ENCODE measurements at regions of chr3 and their contacts with region 1.

Region 1: GRCh38 chr3:54434756-54435155 is 312.4 kb downstream of the CACNA2D3 start:
- DNase-seq: no peak
- H3K4me3 ChIP-seq: no peak overlapping the region
- H3K27ac ChIP-seq: no peak overlapping the region
- H3K4me1 ChIP-seq: no peaks in the 10 kb centered on the region
- H3K27me3 ChIP-seq: no peaks in the 10 kb centered on the region
- CTCF ChIP-seq: no peak

Region 2: DNA sequence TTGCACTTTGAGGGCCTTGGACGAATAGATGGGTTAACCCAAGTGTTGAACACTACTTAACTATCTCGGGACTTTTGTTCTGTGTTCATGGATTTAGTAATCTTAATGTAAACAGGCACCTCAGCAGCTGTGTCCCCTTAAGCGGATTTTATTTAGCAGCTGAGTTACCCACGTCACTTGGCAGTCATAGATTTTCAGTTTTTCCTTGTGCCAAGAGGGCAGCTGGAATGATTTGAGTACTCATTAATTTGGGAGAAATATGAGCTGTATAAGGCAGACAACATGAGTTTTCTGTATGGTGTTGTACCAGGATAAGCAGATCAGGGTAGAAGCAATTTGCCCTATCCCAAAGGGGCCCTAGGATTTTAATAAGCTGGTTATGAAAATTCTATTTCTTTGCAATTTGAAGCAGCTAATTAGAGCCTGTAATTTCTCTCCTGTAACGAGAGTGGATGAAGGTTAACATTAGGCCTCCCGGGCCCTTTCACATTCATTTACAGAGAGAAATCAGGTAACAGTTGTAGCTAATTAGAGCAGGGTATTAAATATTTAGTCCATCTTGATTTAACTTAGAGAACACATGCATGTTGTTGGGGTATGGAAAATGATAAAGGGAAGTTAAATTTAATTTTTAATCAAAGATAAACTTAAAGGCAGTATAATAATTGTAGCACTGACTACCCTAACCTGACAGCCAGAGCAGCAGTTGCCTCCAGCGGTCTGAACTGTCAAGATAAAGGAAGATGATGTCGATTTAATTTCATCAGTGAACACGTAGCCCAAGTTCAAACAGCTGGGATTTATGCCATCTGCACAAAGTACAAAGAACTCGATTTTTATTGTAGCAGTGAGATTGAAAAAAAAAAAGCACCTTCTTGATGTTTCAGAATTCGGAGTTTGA is 298.6 kb after region 1 on chr3:
- CTCF ChIA-PET with region 1: interaction called, 15 read pairs
- dilution Hi-C with region 1: no loop called
- in situ Hi-C with region 1: no loop called
- intact Hi-C with region 1: no loop called
- DNase-seq: no peak
- H3K4me3 ChIP-seq: no peak overlapping the region
- H3K27ac ChIP-seq: no peak overlapping the region
- H3K4me1 ChIP-seq: no peaks in the 10 kb centered on the region
- H3K27me3 ChIP-seq: no peaks in the 10 kb centered on the region
- CTCF ChIP-seq: no peak